ENCODE measurements at regions of chr1 and their contacts with region 1.

Region 1: GRCh38 chr1:46152016-46152415 is 19.6 kb upstream of the PIK3R3 start:
- DNase-seq: no peak
- H3K4me3 ChIP-seq: no peak overlapping the region
- H3K27ac ChIP-seq: no peak overlapping the region
- H3K4me1 ChIP-seq: peaks cover 8% of the 10 kb centered on the region; the same call in 1 of the 2 replicates
- H3K27me3 ChIP-seq: no peaks in the 10 kb centered on the region
- CTCF ChIP-seq: no peak

Region 2: GRCh38 chr1:45824607-45825006 is 327.4 kb before region 1 on chr1:
- CTCF ChIA-PET with region 1: no interaction called
- POLR2A ChIA-PET with region 1: no interaction called
- intact Hi-C with region 1: no loop called
- DNase-seq: no peak
- H3K4me3 ChIP-seq: no peak overlapping the region
- H3K27ac ChIP-seq: no peak overlapping the region
- H3K4me1 ChIP-seq: no peaks in the 10 kb centered on the region
- H3K27me3 ChIP-seq: no peaks in the 10 kb centered on the region
- CTCF ChIP-seq: no peak

Region 3: GRCh38 chr1:45954401-45954847 is 197.6 kb before region 1 on chr1:
- CTCF ChIA-PET with region 1: no interaction called
- POLR2A ChIA-PET with region 1: interaction called, 17 read pairs
- intact Hi-C with region 1: no loop called
- DNase-seq: peak; percentile 28 to 53
- H3K4me3 ChIP-seq: no peak overlapping the region
- H3K27ac ChIP-seq: peak overlapping the region; percentile 39
- H3K4me1 ChIP-seq: peaks cover 12% of the 10 kb centered on the region; the same call in 1 of the 2 replicates
- H3K27me3 ChIP-seq: no peaks in the 10 kb centered on the region
- CTCF ChIP-seq: no peak

Region 4: DNA sequence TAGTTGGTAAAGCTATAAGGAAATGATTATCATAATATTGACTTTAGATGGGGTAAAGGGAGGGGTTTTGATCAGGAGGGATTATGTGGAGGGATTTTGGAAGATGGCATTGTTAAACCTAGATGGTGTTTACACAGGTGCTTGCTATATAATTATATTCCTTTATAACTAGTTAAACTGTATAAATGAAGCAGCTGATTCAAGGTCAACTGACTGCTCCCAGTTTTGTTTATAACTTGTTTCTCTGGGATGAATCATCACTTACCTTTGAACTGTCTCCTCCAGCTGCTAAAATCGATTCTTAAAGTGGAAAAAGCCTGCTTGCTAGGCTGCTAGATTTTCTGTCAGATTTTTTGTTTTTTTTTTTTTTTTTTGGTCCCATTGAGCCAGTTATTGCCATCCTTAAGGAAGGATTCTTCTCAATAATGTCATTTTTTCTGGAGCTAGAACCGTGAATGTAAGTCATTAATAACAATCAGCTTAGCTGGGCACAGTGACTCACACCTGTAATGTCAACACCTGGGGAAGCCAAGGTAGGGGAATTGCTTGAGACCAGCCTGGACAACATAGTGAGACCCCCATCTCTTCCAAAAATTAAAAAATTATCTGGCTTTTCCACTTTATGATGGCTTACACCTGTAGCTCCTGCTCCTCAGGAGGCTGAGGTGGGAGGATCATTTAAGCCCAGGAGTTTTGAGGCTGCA is 172.8 kb before region 1 on chr1:
- CTCF ChIA-PET with region 1: no interaction called
- POLR2A ChIA-PET with region 1: no interaction called
- intact Hi-C with region 1: no loop called
- DNase-seq: peak in 1 of 2 experiments; percentile 67
- H3K4me3 ChIP-seq: no peak overlapping the region
- H3K27ac ChIP-seq: peak overlapping the region; percentile 49
- H3K4me1 ChIP-seq: peaks cover 14% of the 10 kb centered on the region
- H3K27me3 ChIP-seq: no peaks in the 10 kb centered on the region
- CTCF ChIP-seq: no peak

Region 5: DNA sequence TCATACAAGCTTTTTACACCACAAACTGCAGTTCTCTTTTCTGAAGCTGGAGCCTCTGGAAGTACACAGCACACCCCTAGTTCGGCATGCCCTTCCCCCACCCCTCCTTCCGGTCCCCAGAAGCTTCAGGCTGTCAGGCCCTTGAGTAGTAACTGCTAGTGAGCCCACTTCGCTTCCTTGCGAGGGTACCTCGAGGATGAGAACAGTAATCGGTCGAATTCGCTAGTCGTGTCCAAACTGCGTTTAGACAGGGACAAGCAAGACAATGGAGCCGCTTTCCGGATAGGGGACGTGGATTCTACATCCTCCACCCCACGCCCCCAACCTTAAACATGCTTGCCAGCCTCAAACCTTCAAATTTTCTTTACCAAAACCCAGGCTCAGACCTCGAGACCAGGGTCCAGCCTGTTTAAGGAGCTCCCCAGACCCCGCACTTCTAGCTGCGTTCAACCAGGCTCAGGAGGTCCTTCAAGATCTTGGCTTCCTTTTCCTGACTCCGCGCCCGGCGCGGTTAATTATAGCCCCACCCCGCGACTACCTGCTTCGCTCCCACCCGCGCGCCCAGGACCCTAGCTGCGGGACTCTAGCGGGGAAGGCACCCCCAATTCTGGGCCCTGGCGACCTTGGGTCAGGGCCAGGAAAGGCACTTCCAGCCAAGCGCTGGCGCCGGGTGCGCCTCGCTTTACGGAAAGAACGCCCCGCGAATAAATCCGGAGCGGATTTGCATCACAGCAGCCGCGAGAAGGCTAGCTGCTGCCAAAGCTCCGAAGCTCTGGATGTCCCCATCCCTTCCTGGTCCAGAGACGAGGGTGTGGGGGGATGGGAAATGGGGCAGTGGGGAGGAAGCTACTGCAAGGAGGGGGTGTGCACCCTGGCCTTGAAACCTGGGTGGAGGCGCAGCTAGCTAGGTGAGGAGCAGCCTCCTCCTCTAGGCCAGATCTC is 14.8 kb after region 1 on chr1:
- CTCF ChIA-PET with region 1: interaction called, 3 read pairs
- POLR2A ChIA-PET with region 1: interaction called, 29 read pairs
- intact Hi-C with region 1: no loop called
- DNase-seq: no peak
- H3K4me3 ChIP-seq: no peak overlapping the region
- H3K27ac ChIP-seq: no peak overlapping the region
- H3K4me1 ChIP-seq: peaks cover 35% of the 10 kb centered on the region
- H3K27me3 ChIP-seq: no peaks in the 10 kb centered on the region
- CTCF ChIP-seq: no peak

Region 6: GRCh38 chr1:46254668-46255067 is 102.7 kb after region 1 on chr1:
- CTCF ChIA-PET with region 1: no interaction called
- POLR2A ChIA-PET with region 1: no interaction called
- intact Hi-C with region 1: no loop called
- DNase-seq: no peak
- H3K4me3 ChIP-seq: no peak overlapping the region
- H3K27ac ChIP-seq: no peak overlapping the region
- H3K4me1 ChIP-seq: no peaks in the 10 kb centered on the region
- H3K27me3 ChIP-seq: no peaks in the 10 kb centered on the region
- CTCF ChIP-seq: no peak

Region 7: DNA sequence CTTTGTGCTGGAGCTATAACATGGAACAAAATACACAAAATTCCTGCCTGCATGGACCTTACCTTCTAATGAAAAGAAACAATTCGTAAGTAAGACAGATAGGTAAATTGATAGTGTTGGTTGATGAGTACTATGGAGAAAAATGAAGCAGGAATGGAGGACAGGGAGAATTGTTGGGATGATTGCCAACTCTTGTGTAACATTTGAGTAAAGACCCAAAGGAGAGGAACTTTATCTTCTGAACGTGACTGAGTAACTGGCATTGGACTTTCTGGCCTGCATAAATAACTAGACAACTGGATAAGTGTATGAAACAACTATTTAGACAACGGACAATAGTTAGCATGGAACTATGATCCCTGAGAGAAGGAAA is 573.7 kb after region 1 on chr1:
- CTCF ChIA-PET with region 1: no interaction called
- POLR2A ChIA-PET with region 1: no interaction called
- intact Hi-C with region 1: no loop called
- DNase-seq: peak in 1 of 2 experiments; percentile 57
- H3K4me3 ChIP-seq: no peak overlapping the region
- H3K27ac ChIP-seq: no peak overlapping the region
- H3K4me1 ChIP-seq: peaks cover 16% of the 10 kb centered on the region
- H3K27me3 ChIP-seq: peaks cover 4% of the 10 kb centered on the region
- CTCF ChIP-seq: no peak